Activated B cell treated with CpG ODN at 0.5 μM for 24 hours (primary cell): ENCODE measurements at regions of chr6 and their contacts with region 1.

Region 1: DNA sequence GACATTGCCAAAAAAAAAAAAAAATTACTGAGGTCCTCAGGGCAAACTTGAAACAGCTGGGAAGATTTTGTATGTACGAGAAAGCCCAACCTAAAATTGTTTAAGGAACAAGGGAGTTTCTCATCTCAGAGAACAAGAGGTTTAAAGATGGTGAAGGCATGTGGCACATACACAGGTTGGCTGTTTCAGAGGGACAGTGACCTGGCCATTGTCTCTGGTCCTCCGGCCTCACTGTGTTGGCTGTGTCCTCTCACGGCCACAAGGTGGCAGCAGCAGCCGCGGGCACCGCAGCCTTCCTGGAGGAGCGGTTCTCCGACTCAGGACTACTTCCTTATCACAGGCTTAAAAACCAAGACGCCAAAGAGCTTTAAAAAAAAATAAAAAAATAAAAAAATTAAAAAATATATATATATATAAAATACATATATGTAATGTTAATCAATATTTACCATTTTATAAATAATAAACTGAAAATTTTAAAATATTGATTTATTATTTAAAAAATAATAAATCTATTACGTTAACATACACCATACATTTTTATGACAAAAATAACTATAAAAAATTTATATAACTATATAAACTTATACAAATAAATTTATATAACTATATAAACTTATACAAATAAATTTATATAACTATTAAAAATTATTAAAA is 52.8 kb downstream of the GTF2H5 start:
- DNase-seq: peak; percentile 63
- ATAC-seq: peak; percentile 93
- H3K4me3 Mint-ChIP-seq: no peak overlapping the region
- H3K27ac Mint-ChIP-seq: no peak overlapping the region
- H3K4me1 Mint-ChIP-seq: peaks cover 3% of the 10 kb centered on the region
- H3K27me3 Mint-ChIP-seq: no peaks in the 10 kb centered on the region
- CTCF ChIP-seq: peak; percentile 56

Region 2: GRCh38 chr6:158031381-158032353 is 189.2 kb before region 1 on chr6:
- CTCF ChIA-PET with region 1: no interaction called
- POLR2A ChIA-PET with region 1: no interaction called
- intact Hi-C with region 1: no loop called
- DNase-seq: peak; percentile 34
- ATAC-seq: peak; percentile 25
- H3K4me3 Mint-ChIP-seq: peak overlapping the region; percentile 58
- H3K27ac Mint-ChIP-seq: peak overlapping the region; percentile 85
- H3K4me1 Mint-ChIP-seq: peaks cover 44% of the 10 kb centered on the region
- H3K27me3 Mint-ChIP-seq: no peaks in the 10 kb centered on the region
- CTCF ChIP-seq: no peak

Region 3: GRCh38 chr6:158131926-158132325 is 89.0 kb before region 1 on chr6:
- CTCF ChIA-PET with region 1: no interaction called
- POLR2A ChIA-PET with region 1: no interaction called
- intact Hi-C with region 1: no loop called
- DNase-seq: no peak
- ATAC-seq: no peak
- H3K4me3 Mint-ChIP-seq: no peak overlapping the region
- H3K27ac Mint-ChIP-seq: no peak overlapping the region
- H3K4me1 Mint-ChIP-seq: no peaks in the 10 kb centered on the region
- H3K27me3 Mint-ChIP-seq: no peaks in the 10 kb centered on the region
- CTCF ChIP-seq: peak; percentile 21

Region 4: GRCh38 chr6:158242071-158242606 is 21.2 kb after region 1 on chr6:
- CTCF ChIA-PET with region 1: interaction called, 10 read pairs
- POLR2A ChIA-PET with region 1: no interaction called
- intact Hi-C with region 1: no loop called
- DNase-seq: no peak
- ATAC-seq: no peak
- H3K4me3 Mint-ChIP-seq: peak overlapping the region; percentile 24
- H3K27ac Mint-ChIP-seq: peak overlapping the region; percentile 69
- H3K4me1 Mint-ChIP-seq: peaks cover 39% of the 10 kb centered on the region
- H3K27me3 Mint-ChIP-seq: no peaks in the 10 kb centered on the region
- CTCF ChIP-seq: no peak

Region 5: DNA sequence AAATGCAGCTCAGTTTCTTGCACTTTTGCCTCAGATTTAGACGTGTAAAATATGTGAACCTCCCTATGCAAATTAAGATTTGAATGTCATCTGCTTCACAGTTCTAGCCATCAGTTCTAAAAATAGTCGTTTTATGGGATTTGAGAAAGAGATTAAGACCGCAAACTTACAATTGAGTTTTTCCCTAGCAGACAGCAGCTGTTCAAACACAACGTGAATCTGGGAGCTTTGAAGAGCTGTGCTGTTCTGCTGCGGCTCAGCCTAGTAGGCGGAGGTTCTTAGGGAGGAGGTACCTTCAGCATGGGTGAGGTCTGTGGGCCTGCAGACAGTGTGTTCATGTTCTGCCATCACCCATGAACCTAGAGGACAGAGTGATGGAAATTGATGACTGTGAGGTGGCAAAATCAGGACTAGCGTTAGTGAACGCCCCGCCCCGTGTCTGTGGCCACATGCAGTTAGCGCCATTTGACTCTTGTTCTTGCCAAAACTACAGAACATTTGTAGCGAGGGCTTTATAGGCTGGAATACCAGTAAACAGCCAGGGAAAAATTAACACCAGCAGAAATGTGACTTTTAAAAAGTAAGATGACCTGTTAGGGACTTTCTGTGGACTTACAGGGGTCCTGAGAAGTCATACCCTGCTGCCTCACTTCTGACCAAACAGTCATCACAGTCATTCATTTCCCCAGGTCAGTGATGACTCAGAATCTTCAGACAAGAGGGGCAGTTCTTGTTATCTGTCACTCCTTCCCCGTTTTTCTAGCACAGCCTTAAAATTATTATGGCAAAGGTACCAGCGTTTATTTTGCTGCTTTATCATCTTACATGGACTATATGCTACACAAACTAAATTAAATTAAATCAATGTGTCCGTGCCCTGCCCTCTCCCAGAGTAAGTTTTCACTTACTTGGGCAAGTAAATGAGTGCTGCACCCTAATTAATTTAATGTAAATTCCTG is 254.7 kb after region 1 on chr6:
- CTCF ChIA-PET with region 1: interaction called, 3 read pairs
- POLR2A ChIA-PET with region 1: no interaction called
- intact Hi-C with region 1: loop called (anchors 10 kb)
- DNase-seq: no peak
- ATAC-seq: peak; percentile 81
- H3K4me3 Mint-ChIP-seq: peak overlapping the region; percentile 54
- H3K27ac Mint-ChIP-seq: peak overlapping the region; percentile 78
- H3K4me1 Mint-ChIP-seq: peaks cover 40% of the 10 kb centered on the region
- H3K27me3 Mint-ChIP-seq: no peaks in the 10 kb centered on the region
- CTCF ChIP-seq: no peak

Region 6: DNA sequence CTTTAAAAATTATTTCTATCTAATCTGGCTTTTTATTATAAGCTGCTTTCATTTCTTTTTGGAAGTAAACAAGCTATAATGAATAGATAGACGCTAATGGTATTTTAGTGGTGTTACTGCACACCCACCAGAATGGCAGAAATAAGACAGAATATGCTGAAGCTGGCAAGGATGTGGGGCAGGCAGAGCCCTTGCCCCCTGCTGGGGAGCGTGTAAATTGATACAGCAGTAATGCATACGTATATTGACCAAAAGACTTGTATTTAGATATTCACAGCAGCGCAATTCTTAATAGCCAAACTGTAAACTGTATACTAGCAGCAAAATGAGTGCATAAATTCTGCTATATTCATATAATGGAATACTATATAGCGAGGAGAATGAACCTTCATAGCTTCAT is 374.3 kb after region 1 on chr6:
- CTCF ChIA-PET with region 1: interaction called, 17 read pairs
- POLR2A ChIA-PET with region 1: no interaction called
- intact Hi-C with region 1: no loop called
- DNase-seq: no peak
- ATAC-seq: peak; percentile 42
- H3K4me3 Mint-ChIP-seq: no peak overlapping the region
- H3K27ac Mint-ChIP-seq: no peak overlapping the region
- H3K4me1 Mint-ChIP-seq: peaks cover 21% of the 10 kb centered on the region
- H3K27me3 Mint-ChIP-seq: no peaks in the 10 kb centered on the region
- CTCF ChIP-seq: no peak

Region 7: DNA sequence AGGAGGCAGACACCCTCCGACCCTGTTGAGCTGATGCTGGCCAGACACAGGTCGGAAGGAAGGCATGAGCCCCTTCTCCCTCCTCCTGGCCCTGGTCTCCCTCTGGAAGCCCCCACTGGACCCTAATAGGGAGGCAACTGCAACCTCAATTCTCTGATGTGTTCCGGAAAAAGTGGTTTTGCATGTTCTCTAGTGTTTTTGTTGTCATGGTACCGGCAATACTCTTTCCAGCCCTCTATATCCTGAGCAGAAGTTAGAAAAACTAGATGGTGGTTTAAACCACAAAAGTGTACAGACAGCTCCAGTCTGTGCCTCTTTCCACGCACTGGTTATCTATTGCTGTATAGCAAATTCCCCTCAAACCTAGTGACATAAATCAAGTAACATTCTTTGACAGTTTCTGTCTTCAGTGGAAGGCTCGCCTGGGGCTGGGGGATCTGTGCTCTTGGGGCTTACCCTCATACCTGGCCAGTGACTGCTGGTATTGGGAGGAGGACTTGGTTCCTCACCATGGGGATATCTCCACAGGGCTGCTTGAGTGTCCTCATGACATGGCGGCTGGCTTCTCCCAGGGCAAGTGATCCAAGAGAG is 466.0 kb after region 1 on chr6:
- CTCF ChIA-PET with region 1: interaction called, 49 read pairs
- POLR2A ChIA-PET with region 1: interaction called, 4 read pairs
- intact Hi-C with region 1: no loop called
- DNase-seq: no peak
- ATAC-seq: peak; percentile 84
- H3K4me3 Mint-ChIP-seq: no peak overlapping the region
- H3K27ac Mint-ChIP-seq: no peak overlapping the region
- H3K4me1 Mint-ChIP-seq: peaks cover 21% of the 10 kb centered on the region
- H3K27me3 Mint-ChIP-seq: no peaks in the 10 kb centered on the region
- CTCF ChIP-seq: no peak